Heart right ventricle (tissue), 16 donors: ENCODE measurements at regions of chr9 and their contacts with region 1.

Region 1: DNA sequence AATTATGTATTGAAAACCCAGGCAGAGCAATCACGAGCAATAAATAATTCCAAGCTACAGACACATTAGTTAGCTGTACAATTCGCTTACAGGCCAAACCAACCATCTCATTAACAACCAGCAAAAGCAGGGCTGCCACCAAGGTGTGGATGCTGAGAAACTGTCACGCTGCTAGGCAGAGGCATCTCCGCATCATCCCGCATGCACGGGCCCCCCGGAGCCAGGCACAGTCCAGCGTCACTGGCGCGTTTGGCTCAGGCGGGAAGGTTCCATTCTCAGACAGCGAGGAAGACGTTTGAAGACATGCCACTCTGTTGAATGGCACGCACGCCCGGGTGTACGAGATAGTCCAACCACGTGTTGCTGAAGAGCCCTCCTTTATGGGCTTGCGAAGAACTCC is 184.0 kb downstream of the OLFM1 start:
- DNase-seq: no peak
- ATAC-seq: no peak
- H3K4me3 ChIP-seq: no peak overlapping the region
- H3K27ac ChIP-seq: no peak overlapping the region
- H3K4me1 ChIP-seq: no peaks in the 10 kb centered on the region
- H3K27me3 ChIP-seq: peaks cover 0 to 70% (median 30%) of the 10 kb centered on the region in 7 donors
- CTCF ChIP-seq: no peak

Region 2: DNA sequence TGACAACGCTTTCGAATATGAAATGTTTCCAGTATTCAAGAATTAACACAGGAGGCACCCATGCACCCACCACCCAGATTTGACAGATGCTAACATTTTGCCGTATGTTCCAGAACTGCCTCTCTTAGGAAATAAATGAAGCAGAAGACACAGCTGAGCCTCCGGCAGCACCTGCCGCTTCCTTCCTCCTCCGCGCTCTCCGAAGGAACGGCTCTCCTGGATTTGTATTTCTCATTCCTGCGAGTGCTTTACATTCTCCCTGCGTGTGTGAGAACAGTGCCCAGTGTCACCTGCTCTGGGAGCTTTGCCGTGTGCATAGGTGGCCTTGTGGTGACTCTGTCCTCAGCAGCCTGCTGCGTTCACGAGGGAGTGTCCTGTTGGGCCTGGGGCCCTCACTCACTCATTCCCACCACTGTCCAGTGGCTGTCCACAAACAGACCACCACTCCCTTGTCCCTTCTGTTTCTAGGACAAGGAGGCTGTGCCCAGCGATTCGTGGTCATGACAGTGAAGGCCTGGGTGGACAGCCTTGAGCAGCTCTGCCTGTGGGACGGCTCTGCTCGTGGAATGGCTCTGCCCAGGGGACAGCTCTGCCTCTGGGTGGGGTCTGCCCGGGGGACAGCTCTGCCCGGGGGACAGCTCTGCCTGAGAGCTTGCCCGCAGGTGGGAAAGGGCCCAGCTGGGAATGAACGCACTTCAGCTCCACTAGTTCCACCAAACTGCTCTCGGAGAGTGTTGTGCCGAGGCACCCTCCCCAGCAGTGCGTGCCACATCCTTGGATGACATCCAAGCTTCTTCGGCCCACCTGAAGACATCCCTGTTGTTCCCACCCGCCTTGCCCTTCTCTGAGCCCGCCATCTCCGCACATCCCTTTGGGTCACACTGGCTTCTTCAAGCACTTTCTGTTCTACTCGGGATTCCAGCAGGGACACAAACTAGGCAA is 37.7 kb after region 1 on chr9:
- intact Hi-C with region 1: loop called in 1 of 10 experiments (anchors 1 kb)
- DNase-seq: no peak
- ATAC-seq: no peak
- H3K4me3 ChIP-seq: no peak overlapping the region
- H3K27ac ChIP-seq: no peak overlapping the region
- H3K4me1 ChIP-seq: no peaks in the 10 kb centered on the region
- H3K27me3 ChIP-seq: peaks cover 0 to 56% (median 45%) of the 10 kb centered on the region in 7 donors
- CTCF ChIP-seq: no peak